Activated CD8-positive, alpha-beta T cell treated with anti-CD3 and anti-CD28 coated beads for 36 hours (primary cell): ENCODE measurements at regions of chr2 and their contacts with region 1.

Region 1: GRCh38 chr2:225002039-225002655 is 40.1 kb downstream of the DOCK10 start:
- DNase-seq: peak; percentile 80
- ATAC-seq: peak; percentile 72
- H3K4me3 Mint-ChIP-seq: no peak overlapping the region
- H3K27ac Mint-ChIP-seq: peak overlapping the region; percentile 83
- H3K4me1 Mint-ChIP-seq: peaks cover 83% of the 10 kb centered on the region
- H3K27me3 Mint-ChIP-seq: no peaks in the 10 kb centered on the region
- CTCF ChIP-seq: peak; percentile 76

Region 2: DNA sequence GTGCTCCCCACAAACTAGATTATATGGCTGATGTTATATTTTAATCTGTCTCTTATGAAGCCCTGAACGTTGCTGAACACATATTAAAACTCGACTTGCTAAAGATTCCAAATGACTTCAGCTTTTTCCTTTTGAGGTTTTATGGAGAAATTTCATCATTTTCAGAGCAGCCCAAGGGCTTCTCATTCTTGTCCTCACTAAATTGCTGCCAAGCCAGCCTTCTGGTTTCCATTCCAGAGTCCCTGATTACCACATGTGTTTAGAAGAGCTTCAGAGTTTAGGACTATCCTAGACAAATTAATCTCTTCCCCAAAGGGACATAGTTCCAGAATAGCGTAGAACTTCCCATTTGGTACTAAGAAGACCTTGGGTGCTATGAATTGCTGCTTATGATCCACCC is 208.2 kb before region 1 on chr2:
- CTCF ChIA-PET with region 1: no interaction called
- POLR2A ChIA-PET with region 1: no interaction called
- intact Hi-C with region 1: loop called (anchors 10 kb)
- DNase-seq: no peak
- ATAC-seq: no peak
- H3K4me3 Mint-ChIP-seq: no peak overlapping the region
- H3K27ac Mint-ChIP-seq: peak overlapping the region; percentile 45
- H3K4me1 Mint-ChIP-seq: no peaks in the 10 kb centered on the region
- H3K27me3 Mint-ChIP-seq: no peaks in the 10 kb centered on the region
- CTCF ChIP-seq: no peak

Region 3: GRCh38 chr2:224894356-224894755 is 107.8 kb before region 1 on chr2:
- CTCF ChIA-PET with region 1: interaction called, 10 read pairs
- POLR2A ChIA-PET with region 1: no interaction called
- intact Hi-C with region 1: loop called (anchors 5 kb)
- DNase-seq: no peak
- ATAC-seq: peak; percentile 33
- H3K4me3 Mint-ChIP-seq: peak overlapping the region; percentile 32
- H3K27ac Mint-ChIP-seq: peak overlapping the region; percentile 93
- H3K4me1 Mint-ChIP-seq: peaks cover 66% of the 10 kb centered on the region
- H3K27me3 Mint-ChIP-seq: no peaks in the 10 kb centered on the region
- CTCF ChIP-seq: no peak

Region 4: DNA sequence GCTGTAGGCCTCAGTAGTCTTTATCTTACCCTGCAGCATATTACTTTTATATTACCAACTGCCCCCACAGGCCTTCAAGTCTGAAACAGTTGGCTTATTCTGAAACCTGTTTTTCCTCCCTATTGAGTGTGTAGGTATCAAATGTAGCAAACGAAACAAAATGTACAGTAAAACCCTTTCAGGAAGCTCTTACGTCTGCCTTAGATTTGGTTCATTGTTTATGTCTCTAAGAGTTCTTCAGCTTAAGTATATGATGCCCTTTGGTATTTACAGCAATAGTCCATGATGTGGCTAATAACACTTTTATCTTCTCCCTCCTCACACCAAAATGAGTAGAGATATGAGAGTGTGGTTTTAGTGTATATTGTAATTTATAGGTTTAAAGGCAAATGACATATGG is 68.7 kb before region 1 on chr2:
- CTCF ChIA-PET with region 1: interaction called, 26 read pairs
- POLR2A ChIA-PET with region 1: interaction called, 14 read pairs
- intact Hi-C with region 1: loop called (anchors 2 kb)
- DNase-seq: no peak
- ATAC-seq: peak; percentile 62
- H3K4me3 Mint-ChIP-seq: peak overlapping the region; percentile 18
- H3K27ac Mint-ChIP-seq: peak overlapping the region; percentile 94
- H3K4me1 Mint-ChIP-seq: peaks cover 89% of the 10 kb centered on the region
- H3K27me3 Mint-ChIP-seq: no peaks in the 10 kb centered on the region
- CTCF ChIP-seq: no peak

Region 5: GRCh38 chr2:224946895-224947294 is 55.3 kb before region 1 on chr2:
- CTCF ChIA-PET with region 1: interaction called, 31 read pairs
- POLR2A ChIA-PET with region 1: interaction called, 9 read pairs
- intact Hi-C with region 1: loop called (anchors 5 kb)
- DNase-seq: no peak
- ATAC-seq: peak; percentile 50
- H3K4me3 Mint-ChIP-seq: peak overlapping the region; percentile 78
- H3K27ac Mint-ChIP-seq: peak overlapping the region; percentile 90
- H3K4me1 Mint-ChIP-seq: peaks cover 59% of the 10 kb centered on the region
- H3K27me3 Mint-ChIP-seq: no peaks in the 10 kb centered on the region
- CTCF ChIP-seq: no peak

Region 6: GRCh38 chr2:225041851-225042799 is 40.0 kb after region 1 on chr2 and contains the start of gene DOCK10:
- CTCF ChIA-PET with region 1: interaction called, 9 read pairs
- POLR2A ChIA-PET with region 1: interaction called, 12 read pairs
- intact Hi-C with region 1: no loop called
- DNase-seq: peak; percentile 42
- ATAC-seq: peak; percentile 28
- H3K4me3 Mint-ChIP-seq: peak within 1 kb of the TSS; percentile 99
- H3K27ac Mint-ChIP-seq: peak within 1 kb of the TSS; percentile 99
- H3K4me1 Mint-ChIP-seq: peaks cover 49% of the 10 kb centered on the region
- H3K27me3 Mint-ChIP-seq: no peaks in the 10 kb centered on the region
- CTCF ChIP-seq: no peak
- total RNA-seq, gene DOCK10: 191 to 198 TPM